Prostate gland (tissue), 2 donors: ENCODE measurements at regions of chr7 and their contacts with region 1.

Region 1: DNA sequence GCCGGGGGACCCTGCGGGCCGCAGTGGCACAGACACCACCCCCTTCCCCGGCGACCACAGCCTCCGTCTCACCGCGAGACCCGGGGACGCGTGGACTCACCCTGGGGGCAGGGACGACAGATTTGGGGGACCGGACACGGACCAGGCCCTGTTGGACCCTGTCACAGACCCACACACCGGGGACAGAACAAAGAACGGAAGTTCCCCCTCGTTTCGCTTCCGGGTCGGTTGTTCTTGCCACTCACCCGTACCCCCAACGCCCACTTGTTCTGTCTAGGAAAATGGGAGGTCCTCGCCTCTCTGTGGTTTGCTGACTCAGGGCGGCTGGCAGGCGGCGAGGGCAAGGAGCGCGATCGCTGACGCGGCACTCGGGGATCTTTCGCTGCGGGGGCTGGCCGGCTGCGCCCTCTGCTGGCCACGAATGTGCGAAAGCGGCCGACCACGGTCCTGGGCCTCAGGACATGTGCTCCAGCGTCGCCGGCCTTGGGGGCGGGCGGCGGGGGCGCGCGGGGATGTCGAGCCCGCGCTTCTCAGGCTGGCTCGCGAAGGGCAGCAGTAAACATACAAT is at the start of gene ZNF3:
- DNase-seq: peak; percentile 98
- H3K4me3 ChIP-seq: peak within 1 kb of the TSS; percentile 67 to 93
- H3K27ac ChIP-seq: peak within 1 kb of the TSS; percentile 76 to 82
- H3K4me1 ChIP-seq: peaks cover 10% of the 10 kb centered on the region
- H3K27me3 ChIP-seq: no peaks in the 10 kb centered on the region
- CTCF ChIP-seq: peak; percentile 94 to 98 (median 97)
- POLR2A ChIP-seq: peak; percentile 32
- total RNA-seq, gene ZNF3: 20.5 to 21.4 TPM

Region 2: DNA sequence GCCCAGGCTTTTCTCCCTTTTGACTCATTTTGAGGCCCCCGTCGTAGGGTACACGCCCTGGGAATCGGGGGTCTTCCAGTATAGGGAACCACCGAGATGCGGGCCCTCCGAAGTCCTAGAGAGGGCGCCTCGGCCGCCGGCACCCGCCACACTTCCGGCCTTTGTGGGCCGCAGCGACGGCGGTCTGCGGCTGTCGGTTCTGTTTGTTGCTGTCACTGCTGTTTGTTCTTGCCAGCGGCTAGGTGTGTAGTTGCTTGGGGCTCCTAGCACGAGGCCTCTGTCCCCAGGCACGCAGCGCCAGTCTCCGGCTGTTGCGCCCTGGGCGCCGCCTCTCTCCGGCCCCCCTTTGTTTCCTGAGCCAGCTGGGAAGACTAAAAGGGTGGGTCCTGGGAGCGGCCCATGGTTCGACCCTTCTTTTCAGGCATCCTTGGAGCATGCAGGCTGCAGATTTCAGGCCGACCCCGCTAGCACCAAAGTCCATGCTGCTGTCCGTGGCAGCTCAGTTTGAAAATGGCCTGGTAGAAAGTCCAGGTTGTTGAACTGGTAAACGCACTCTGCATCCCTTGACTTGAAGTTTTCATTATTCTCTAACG is 84.0 kb before region 1 on chr7:
- intact Hi-C with region 1: loop called (anchors 2 kb)
- DNase-seq: peak; percentile 35
- H3K4me3 ChIP-seq: peak overlapping the region; percentile 21 to 31
- H3K27ac ChIP-seq: peak overlapping the region; percentile 90 to 93
- H3K4me1 ChIP-seq: peaks cover 6% of the 10 kb centered on the region
- H3K27me3 ChIP-seq: no peaks in the 10 kb centered on the region
- CTCF ChIP-seq: peak in 2 of 4 experiments; percentile 44 to 58
- POLR2A ChIP-seq: no peak

Region 3: GRCh38 chr7:100015232-100016209 is 66.1 kb before region 1 on chr7 and contains the start of gene ZKSCAN1:
- intact Hi-C with region 1: loop called (anchors 2 kb)
- DNase-seq: peak; percentile 86
- H3K4me3 ChIP-seq: peak within 1 kb of the TSS; percentile 82 to 100
- H3K27ac ChIP-seq: peak within 1 kb of the TSS; percentile 99 to 100
- H3K4me1 ChIP-seq: peaks cover 13% of the 10 kb centered on the region
- H3K27me3 ChIP-seq: no peaks in the 10 kb centered on the region
- CTCF ChIP-seq: peak in 1 of 4 experiments; percentile 2
- POLR2A ChIP-seq: peak; percentile 80
- total RNA-seq, gene ZKSCAN1: 75.8 to 86.5 TPM